ENCODE measurements at regions of chr3 and their contacts with region 1.

Region 1: DNA sequence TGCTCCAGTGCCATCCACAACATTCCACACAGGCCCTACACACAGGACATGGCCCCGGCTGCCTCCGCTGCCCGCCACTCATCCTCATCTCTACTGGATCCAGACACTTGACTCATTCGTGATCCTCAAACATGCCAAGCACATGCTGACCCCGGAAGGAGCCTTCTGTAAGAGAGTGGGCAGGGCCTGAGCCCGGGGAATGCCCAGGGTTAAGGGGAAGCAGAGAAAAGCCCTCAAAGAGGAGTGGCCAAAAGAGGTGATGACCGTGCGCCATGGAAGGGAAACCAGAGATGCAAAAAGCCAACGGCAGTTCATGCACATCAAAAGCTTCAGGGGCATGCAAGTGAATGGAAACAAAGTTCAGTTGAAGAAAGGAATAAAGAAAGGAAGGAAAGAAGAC is 46.1 kb downstream of the RFTN1 start:
- DNase-seq: peak; percentile 48
- H3K4me3 Mint-ChIP-seq: peak overlapping the region; percentile 74
- H3K27ac Mint-ChIP-seq: peak overlapping the region; percentile 93
- H3K4me1 Mint-ChIP-seq: peaks cover 64% of the 10 kb centered on the region
- H3K27me3 Mint-ChIP-seq: no peaks in the 10 kb centered on the region

Region 2: GRCh38 chr3:16300881-16301359 is 166.5 kb before region 1 on chr3:
- intact Hi-C with region 1: loop called (anchors 2 kb)
- DNase-seq: peak; percentile 58
- H3K4me3 Mint-ChIP-seq: peak overlapping the region; percentile 82
- H3K27ac Mint-ChIP-seq: peak overlapping the region; percentile 94
- H3K4me1 Mint-ChIP-seq: peaks cover 85% of the 10 kb centered on the region
- H3K27me3 Mint-ChIP-seq: no peaks in the 10 kb centered on the region

Region 3: DNA sequence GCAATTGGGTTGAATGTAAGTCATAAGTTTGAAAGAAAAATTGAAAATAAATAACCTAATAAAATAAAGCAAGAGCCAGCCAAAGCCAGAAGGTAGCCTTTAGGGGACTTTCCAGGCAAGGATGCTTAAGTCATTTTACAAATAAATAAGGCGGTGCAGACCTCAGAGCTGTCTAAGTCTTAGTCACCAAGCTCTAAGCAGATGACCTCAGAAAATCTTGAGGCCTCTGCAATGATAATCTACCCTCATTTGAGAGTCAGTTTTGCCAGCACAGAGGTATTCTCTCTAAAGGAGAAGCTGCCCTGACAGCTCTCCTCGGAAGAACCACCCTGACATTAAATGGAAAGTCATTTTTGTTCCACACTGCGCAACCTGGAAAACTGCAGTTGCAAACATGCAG is 88.5 kb before region 1 on chr3:
- intact Hi-C with region 1: loop called (anchors 5 kb)
- DNase-seq: no peak
- H3K4me3 Mint-ChIP-seq: no peak overlapping the region
- H3K27ac Mint-ChIP-seq: peak overlapping the region; percentile 80
- H3K4me1 Mint-ChIP-seq: peaks cover 69% of the 10 kb centered on the region
- H3K27me3 Mint-ChIP-seq: no peaks in the 10 kb centered on the region

Region 4: GRCh38 chr3:16448639-16449070 is 18.7 kb before region 1 on chr3:
- intact Hi-C with region 1: loop called (anchors 2 kb)
- DNase-seq: no peak
- H3K4me3 Mint-ChIP-seq: no peak overlapping the region
- H3K27ac Mint-ChIP-seq: peak overlapping the region; percentile 79
- H3K4me1 Mint-ChIP-seq: peaks cover 55% of the 10 kb centered on the region
- H3K27me3 Mint-ChIP-seq: no peaks in the 10 kb centered on the region

Region 5: DNA sequence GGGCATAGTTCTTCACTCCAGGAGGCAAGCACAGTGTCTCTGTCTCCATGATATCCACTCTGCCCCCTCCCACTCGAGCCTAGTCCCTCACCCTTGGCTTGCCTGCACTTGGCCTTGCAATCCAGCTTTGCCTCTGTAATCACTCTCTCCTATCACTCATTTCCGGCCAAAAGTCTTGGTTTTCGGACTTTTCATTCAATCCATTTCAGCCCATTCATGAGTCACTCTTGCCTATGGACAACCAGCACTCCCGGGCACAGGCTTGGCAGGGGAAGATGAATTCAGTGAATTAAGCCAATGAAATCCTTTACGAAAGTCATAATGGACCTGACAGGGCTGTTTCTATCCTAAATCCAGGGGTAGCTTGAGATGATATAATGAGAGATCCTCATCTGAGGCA is 116.2 kb after region 1 on chr3:
- intact Hi-C with region 1: no loop called
- DNase-seq: no peak
- H3K4me3 Mint-ChIP-seq: no peak overlapping the region
- H3K27ac Mint-ChIP-seq: no peak overlapping the region
- H3K4me1 Mint-ChIP-seq: peaks cover 6% of the 10 kb centered on the region
- H3K27me3 Mint-ChIP-seq: peaks cover 37% of the 10 kb centered on the region